CD4-positive, alpha-beta memory T cell (primary cell): ENCODE measurements at regions of chr5 and their contacts with region 1.

Region 1: DNA sequence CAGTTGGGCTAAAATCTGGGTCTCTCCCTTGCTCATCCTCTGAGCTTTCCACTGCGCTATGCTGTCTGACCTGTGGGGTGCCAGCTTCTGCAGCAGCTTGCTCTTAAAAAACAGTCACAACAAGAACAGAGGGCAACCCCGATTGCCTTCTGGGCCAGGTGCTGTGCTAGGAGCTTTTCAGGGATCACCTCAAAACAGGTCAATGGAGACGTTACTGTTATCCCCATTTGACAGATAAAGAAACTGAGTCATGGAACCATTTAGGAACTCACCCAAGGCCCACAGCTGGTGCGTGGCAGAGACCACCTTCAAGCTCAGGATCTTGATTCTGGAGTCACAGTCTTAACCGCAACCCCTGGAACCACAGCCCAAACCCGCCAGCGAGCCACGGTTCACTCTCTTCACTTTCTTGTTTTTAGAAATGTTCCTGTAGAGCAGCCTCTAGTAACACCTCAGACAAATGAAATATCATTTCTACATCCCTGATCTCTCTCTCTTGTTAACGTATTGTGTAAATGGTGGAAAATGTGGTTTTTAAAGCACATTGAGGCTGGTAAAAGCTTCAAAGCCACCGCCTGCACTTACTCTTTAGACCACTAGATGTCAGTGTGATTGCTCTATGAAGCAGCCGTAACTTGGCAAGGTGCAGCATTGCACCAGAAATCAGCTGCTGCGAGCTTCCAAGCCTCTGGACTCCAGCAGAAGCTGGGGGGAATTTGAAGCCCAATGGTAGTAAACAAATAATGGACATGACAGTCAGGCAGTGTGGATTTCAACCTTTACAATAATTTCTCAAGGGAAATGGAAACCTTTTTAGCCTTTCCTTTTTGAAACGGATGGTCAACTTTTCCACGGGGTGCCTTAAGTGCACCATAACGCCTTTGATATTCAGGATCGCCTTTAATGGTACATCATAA is 1.7 kb downstream of the FYB1 start:
- DNase-seq: peak; percentile 83 to 86 (median 84)
- H3K4me3 ChIP-seq: peak overlapping the region; percentile 33 to 64
- H3K4me3 Mint-ChIP-seq: peak overlapping the region; percentile 80 to 90 (median 86)
- H3K27ac ChIP-seq: peak overlapping the region; percentile 62
- H3K27ac Mint-ChIP-seq: peak overlapping the region; percentile 87 to 96 (median 93)
- H3K4me1 ChIP-seq: peaks cover 68% of the 10 kb centered on the region
- H3K4me1 Mint-ChIP-seq: peaks cover 54 to 71% (median 65%) of the 10 kb centered on the region in 4 donors
- H3K27me3 ChIP-seq: no peaks in the 10 kb centered on the region
- H3K27me3 Mint-ChIP-seq: no peaks in the 10 kb centered on the region

Region 2: DNA sequence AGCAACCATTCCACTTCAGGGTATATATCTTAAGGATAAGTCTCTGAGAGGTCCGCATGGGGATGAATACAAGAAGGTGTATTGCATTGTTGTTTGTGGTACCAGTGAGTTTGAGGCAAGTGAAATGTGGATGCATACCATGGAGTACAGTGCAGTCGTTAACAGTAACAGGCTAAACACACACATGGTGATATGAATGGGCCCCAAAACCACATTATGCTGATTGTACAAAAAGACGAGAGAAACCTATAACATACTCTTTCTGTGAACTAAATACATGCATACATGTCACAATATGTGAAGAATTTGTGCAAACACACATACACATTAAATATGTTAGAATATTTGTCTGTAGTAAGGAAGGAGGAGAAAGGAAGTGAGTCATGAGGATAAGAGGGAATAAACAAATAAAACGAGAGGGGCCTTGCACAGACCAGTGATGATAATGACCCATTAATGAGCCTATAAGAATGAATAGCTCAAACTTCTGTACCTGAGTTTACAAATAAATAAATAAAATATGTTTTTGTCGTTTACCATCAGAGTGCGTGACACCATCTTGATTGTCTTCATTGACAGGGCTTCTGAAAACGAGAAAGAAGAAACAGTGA is 77.0 kb before region 1 on chr5:
- CTCF ChIA-PET with region 1: interaction called, 6 read pairs
- POLR2A ChIA-PET with region 1: interaction called, 13 read pairs
- intact Hi-C with region 1: no loop called
- DNase-seq: no peak
- H3K4me3 ChIP-seq: no peak overlapping the region
- H3K4me3 Mint-ChIP-seq: peak overlapping the region in 2 of 8 donors; percentile 1 to 45
- H3K27ac ChIP-seq: peak overlapping the region; percentile 11
- H3K27ac Mint-ChIP-seq: peak overlapping the region in 6 of 7 donors; percentile 19 to 75 (median 42)
- H3K4me1 ChIP-seq: peaks cover 69% of the 10 kb centered on the region
- H3K4me1 Mint-ChIP-seq: peaks cover 24 to 31% (median 26%) of the 10 kb centered on the region in 4 donors
- H3K27me3 ChIP-seq: no peaks in the 10 kb centered on the region
- H3K27me3 Mint-ChIP-seq: no peaks in the 10 kb centered on the region

Region 3: GRCh38 chr5:39177631-39177964 is 40.0 kb before region 1 on chr5:
- CTCF ChIA-PET with region 1: interaction called, 166 read pairs
- POLR2A ChIA-PET with region 1: interaction called, 1,810 read pairs
- intact Hi-C with region 1: loop called (anchors 1 kb)
- DNase-seq: peak; percentile 67 to 78 (median 71)
- H3K4me3 ChIP-seq: peak overlapping the region; percentile 18 to 25
- H3K4me3 Mint-ChIP-seq: peak overlapping the region; percentile 66 to 81 (median 75)
- H3K27ac ChIP-seq: peak overlapping the region; percentile 56
- H3K27ac Mint-ChIP-seq: peak overlapping the region; percentile 91 to 97 (median 92)
- H3K4me1 ChIP-seq: peaks cover 100% of the 10 kb centered on the region
- H3K4me1 Mint-ChIP-seq: peaks cover 87 to 98% (median 93%) of the 10 kb centered on the region in 4 donors
- H3K27me3 ChIP-seq: no peaks in the 10 kb centered on the region
- H3K27me3 Mint-ChIP-seq: no peaks in the 10 kb centered on the region

Region 4: DNA sequence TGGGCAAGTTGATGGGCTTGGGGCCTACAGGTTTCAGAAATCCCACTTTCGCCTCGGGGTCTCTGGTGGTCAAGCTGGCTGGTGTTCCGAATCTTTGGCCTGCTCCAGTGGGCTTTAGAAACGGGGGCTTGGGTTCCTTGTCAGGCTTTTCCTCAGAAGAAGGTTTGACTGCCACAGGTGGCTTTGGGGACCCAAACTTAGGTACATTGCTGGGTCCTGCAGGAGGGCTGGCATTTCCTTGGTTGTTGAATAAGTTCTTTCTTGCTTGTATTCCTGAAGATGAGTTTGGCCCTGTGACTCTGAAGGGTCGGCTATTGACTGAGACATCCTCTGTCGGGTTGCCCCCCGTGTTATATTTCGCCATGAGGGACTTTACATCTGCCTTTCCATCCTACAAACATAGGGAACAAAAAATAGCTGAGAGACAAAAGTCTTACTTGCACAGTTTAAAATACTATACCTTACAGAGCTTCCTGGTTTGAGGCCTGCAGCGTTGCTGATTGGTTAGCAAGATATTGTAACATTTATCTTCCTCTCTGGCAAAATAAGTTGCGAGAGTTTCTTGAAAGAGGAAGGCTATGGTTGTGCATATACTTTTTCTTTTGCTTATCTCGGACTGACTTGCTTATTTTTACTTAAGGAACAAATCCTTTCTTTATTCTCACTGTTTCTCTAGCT is 14.9 kb before region 1 on chr5:
- CTCF ChIA-PET with region 1: interaction called, 313 read pairs
- POLR2A ChIA-PET with region 1: interaction called, 534 read pairs
- intact Hi-C with region 1: loop called (anchors 1 kb)
- DNase-seq: peak; percentile 59 to 70 (median 67)
- H3K4me3 ChIP-seq: peak overlapping the region; percentile 74 to 96
- H3K4me3 Mint-ChIP-seq: peak overlapping the region; percentile 94 to 100 (median 98)
- H3K27ac ChIP-seq: peak overlapping the region; percentile 84
- H3K27ac Mint-ChIP-seq: peak overlapping the region; percentile 91 to 99 (median 96)
- H3K4me1 ChIP-seq: peaks cover 44% of the 10 kb centered on the region
- H3K4me1 Mint-ChIP-seq: peaks cover 31 to 51% (median 40%) of the 10 kb centered on the region in 4 donors
- H3K27me3 ChIP-seq: no peaks in the 10 kb centered on the region
- H3K27me3 Mint-ChIP-seq: no peaks in the 10 kb centered on the region

Region 5: DNA sequence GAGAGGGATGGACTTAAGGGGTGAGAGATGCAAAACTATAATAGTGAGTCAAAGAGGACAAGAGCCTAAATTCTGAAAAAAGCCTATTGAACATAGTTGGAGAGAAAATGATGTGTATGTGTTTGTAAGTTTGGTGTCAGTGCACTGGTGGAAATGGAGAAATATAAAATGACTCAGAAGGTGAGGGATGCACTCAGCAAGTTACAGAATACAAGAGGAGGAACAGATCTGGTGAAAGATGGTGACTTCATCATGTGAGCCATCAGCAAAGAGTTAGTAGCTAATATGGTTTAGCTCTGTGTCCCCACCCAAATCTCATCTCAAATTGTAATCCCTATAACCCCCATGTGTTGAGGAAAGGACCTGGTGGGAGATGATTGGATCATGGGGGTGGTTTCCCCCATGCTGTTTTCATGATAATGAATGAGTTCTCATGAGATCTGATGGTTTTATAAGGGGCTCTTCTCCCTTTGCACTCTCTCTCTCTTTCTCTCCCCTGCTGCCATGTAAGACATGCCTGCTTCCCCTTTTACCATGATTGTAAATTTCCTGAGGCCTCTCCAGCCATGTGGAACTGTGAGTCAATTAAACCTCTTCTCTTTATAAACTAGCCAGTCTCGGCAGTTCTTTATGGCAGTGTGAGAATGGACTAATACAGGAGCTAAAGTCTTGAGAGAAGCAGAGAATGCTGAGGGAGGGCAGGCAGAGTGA is 32.1 kb after region 1 on chr5:
- CTCF ChIA-PET with region 1: interaction called, 16 read pairs
- POLR2A ChIA-PET with region 1: interaction called, 3 read pairs
- intact Hi-C with region 1: no loop called
- DNase-seq: no peak
- H3K4me3 ChIP-seq: no peak overlapping the region
- H3K4me3 Mint-ChIP-seq: no peak overlapping the region
- H3K27ac ChIP-seq: no peak overlapping the region
- H3K27ac Mint-ChIP-seq: no peak overlapping the region
- H3K4me1 ChIP-seq: no peaks in the 10 kb centered on the region
- H3K4me1 Mint-ChIP-seq: peaks cover 0 to 7% (median under 1%) of the 10 kb centered on the region in 4 donors
- H3K27me3 ChIP-seq: no peaks in the 10 kb centered on the region
- H3K27me3 Mint-ChIP-seq: peaks cover 2 to 3% of the 10 kb centered on the region in 2 donors

Region 6: DNA sequence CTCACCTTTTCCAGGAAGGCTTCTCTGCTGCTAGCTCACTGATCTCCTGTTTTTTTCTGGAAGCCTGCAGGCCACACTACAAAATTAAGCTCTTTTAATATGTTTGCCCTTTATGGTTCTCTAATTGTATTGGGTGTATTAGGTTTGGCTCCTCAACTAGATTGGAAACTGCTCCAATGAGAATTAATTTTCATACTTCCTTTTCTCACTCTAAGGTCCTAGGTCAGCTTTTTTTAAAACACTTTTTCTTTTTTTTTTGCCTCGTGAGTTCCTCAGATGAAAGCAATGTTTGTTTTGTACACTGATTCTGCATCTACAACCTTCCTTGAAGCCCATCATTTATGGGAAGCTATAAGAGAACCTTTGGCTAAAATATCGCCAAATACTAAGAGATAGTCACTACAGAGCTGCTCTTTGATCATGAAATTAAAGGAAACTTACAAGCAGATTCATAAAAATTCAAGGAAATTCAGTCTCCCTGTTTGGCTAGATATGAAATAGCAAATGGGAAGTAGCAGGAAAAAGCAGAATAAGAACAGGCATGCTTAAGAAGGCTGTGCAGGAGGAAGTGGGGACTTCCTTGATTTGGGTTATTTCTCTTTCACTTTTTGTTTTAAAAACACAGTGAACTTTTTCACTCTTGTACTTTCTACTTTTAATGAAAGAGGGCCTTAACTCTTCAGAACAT is 56.9 kb after region 1 on chr5:
- CTCF ChIA-PET with region 1: interaction called, 221 read pairs
- POLR2A ChIA-PET with region 1: interaction called, 59 read pairs
- intact Hi-C with region 1: loop called (anchors 2 kb)
- DNase-seq: peak; percentile 36 to 53 (median 41)
- H3K4me3 ChIP-seq: peak overlapping the region; percentile 20 to 25
- H3K4me3 Mint-ChIP-seq: peak overlapping the region; percentile 72 to 89 (median 85)
- H3K27ac ChIP-seq: peak overlapping the region; percentile 73
- H3K27ac Mint-ChIP-seq: peak overlapping the region; percentile 90 to 98 (median 96)
- H3K4me1 ChIP-seq: peaks cover 54% of the 10 kb centered on the region
- H3K4me1 Mint-ChIP-seq: peaks cover 37 to 71% (median 51%) of the 10 kb centered on the region in 4 donors
- H3K27me3 ChIP-seq: no peaks in the 10 kb centered on the region
- H3K27me3 Mint-ChIP-seq: no peaks in the 10 kb centered on the region

Region 7: DNA sequence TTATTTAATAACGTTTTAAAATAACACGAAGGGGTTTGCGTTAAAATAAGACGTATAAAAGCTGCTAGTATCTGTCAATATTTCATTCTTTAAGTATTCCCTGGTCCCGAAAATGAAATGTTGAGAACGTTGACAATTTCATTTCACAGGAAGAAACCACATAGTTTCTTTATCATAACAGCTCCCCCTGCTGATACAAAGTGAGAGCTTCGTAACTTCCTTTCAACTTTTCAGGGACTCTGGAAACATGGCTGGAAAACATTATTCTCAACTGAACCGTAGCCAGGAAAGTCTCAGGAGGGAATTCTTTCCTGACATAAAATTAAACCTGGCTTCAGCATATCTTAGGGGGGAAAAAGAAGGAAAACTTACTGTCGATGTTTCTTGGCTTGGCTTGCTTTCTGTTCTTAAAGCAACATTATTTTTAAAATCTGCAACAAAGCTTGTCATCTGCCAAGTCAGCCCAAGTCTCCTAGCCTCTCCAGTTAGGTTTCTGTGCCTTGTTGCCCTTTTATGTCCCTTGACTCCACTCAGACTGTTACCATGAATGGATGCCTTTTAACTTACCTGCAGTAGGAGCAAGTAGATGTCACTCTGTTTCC is 330.0 kb after region 1 on chr5:
- CTCF ChIA-PET with region 1: interaction called, 23 read pairs
- POLR2A ChIA-PET with region 1: interaction called, 10 read pairs
- intact Hi-C with region 1: loop called (anchors 1 kb)
- DNase-seq: peak in 4 of 5 donors; percentile 32 to 39 (median 34)
- H3K4me3 ChIP-seq: no peak overlapping the region
- H3K4me3 Mint-ChIP-seq: peak overlapping the region in 7 of 8 donors; percentile 4 to 64 (median 29)
- H3K27ac ChIP-seq: no peak overlapping the region
- H3K27ac Mint-ChIP-seq: no peak overlapping the region
- H3K4me1 ChIP-seq: peaks cover 7% of the 10 kb centered on the region
- H3K4me1 Mint-ChIP-seq: peaks cover 3 to 5% (median 5%) of the 10 kb centered on the region in 4 donors
- H3K27me3 ChIP-seq: no peaks in the 10 kb centered on the region
- H3K27me3 Mint-ChIP-seq: peaks cover 0 to 1% of the 10 kb centered on the region in 2 donors